Common myeloid progenitor, CD34-positive (primary cell): ENCODE measurements at regions of chr11 and their contacts with region 1.

Region 1: DNA sequence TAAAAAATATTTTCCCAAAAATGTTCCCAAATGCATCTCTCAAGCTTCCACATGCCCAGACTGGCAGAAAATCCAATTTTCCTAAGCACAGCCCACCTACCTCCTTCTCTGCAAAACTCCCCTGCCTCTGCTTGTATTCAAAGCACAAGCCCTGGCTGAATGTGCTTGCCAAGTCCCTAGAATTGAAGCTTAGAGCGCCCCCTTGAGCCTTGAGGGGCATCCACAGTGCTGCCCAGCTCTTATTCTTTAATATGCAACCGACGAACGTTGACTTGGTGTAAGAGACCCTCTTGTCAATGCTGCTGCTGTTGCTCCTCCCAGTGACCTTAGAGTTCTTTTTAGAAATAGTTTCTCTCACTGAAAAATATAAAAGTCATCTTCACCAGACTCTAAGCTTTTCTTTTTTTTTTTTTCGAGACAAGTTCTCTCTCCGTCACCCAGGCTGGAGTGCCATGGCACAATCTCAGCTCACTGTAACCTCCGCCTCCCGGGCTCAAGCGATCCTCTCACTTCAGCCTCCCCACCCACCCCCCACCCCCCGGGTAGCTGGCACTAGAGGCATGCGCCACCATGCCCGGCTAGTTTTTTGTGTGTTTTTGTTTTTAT is 63.5 kb upstream of the CAPRIN1 start:
- DNase-seq: peak; percentile 89 to 95 (median 95)
- H3K4me3 ChIP-seq: no peak overlapping the region
- H3K27ac ChIP-seq: no peak overlapping the region
- H3K4me1 ChIP-seq: peaks cover 0 to 7% (median 0%) of the 10 kb centered on the region in 4 experiments
- H3K27me3 ChIP-seq: no peaks in the 10 kb centered on the region

Region 2: GRCh38 chr11:33829433-33830141 is 158.5 kb before region 1 on chr11:
- CTCF ChIA-PET with region 1: interaction called, 19 read pairs
- POLR2A ChIA-PET with region 1: no interaction called
- DNase-seq: peak; percentile 73 to 86 (median 83)
- H3K4me3 ChIP-seq: peak overlapping the region in 6 of 7 experiments; percentile 20 to 75 (median 58)
- H3K27ac ChIP-seq: no peak overlapping the region
- H3K4me1 ChIP-seq: peaks cover 0 to 12% (median 8%) of the 10 kb centered on the region in 4 experiments
- H3K27me3 ChIP-seq: peaks cover 9 to 35% (median 17%) of the 10 kb centered on the region in 5 experiments

Region 3: GRCh38 chr11:33842236-33842915 is 145.7 kb before region 1 on chr11:
- CTCF ChIA-PET with region 1: interaction called, 11 read pairs
- POLR2A ChIA-PET with region 1: no interaction called
- DNase-seq: no peak
- H3K4me3 ChIP-seq: no peak overlapping the region
- H3K27ac ChIP-seq: no peak overlapping the region
- H3K4me1 ChIP-seq: no peaks in the 10 kb centered on the region
- H3K27me3 ChIP-seq: peaks cover 0 to 2% (median 0%) of the 10 kb centered on the region in 5 experiments

Region 4: GRCh38 chr11:33857933-33858371 is 130.1 kb before region 1 on chr11:
- CTCF ChIA-PET with region 1: interaction called, 409 read pairs
- POLR2A ChIA-PET with region 1: no interaction called
- DNase-seq: peak; percentile 85 to 91 (median 87)
- H3K4me3 ChIP-seq: no peak overlapping the region
- H3K27ac ChIP-seq: no peak overlapping the region
- H3K4me1 ChIP-seq: peaks cover 0 to 39% (median 13%) of the 10 kb centered on the region in 4 experiments
- H3K27me3 ChIP-seq: no peaks in the 10 kb centered on the region

Region 5: GRCh38 chr11:33869481-33870422 is 118.3 kb before region 1 on chr11:
- CTCF ChIA-PET with region 1: interaction called, 409 read pairs
- POLR2A ChIA-PET with region 1: no interaction called
- DNase-seq: peak; percentile 67 to 88 (median 88)
- H3K4me3 ChIP-seq: peak overlapping the region; percentile 66 to 94 (median 89)
- H3K27ac ChIP-seq: peak overlapping the region; percentile 72 to 91
- H3K4me1 ChIP-seq: peaks cover 37 to 78% (median 65%) of the 10 kb centered on the region in 4 experiments
- H3K27me3 ChIP-seq: no peaks in the 10 kb centered on the region

Region 6: DNA sequence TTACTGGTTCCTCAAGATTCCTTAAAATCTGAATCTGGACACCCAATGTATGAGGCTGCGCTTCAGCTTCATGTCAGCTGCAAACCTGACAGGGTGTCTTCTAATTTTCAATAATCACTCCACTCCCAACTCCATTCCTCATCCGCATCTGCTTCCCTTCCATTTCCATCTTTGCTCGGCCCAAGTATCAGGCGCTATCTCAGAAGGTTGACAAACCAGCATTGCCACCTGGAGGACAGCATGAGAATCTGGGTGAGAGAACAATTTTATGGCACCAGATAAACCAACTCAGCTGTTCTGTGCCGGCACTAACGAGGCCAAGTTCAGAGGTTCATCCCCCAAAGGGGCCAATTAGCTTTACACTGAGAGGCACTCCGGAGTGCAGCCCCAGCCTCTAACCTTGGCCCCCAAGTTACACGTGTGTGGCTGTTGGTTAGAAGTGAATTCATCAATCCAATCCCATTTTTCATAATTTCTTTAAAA is 17.1 kb before region 1 on chr11:
- CTCF ChIA-PET with region 1: interaction called, 28 read pairs
- POLR2A ChIA-PET with region 1: no interaction called
- DNase-seq: peak; percentile 74 to 80 (median 75)
- H3K4me3 ChIP-seq: no peak overlapping the region
- H3K27ac ChIP-seq: no peak overlapping the region
- H3K4me1 ChIP-seq: peaks cover 2 to 8% (median 8%) of the 10 kb centered on the region in 4 experiments
- H3K27me3 ChIP-seq: no peaks in the 10 kb centered on the region